ENCODE measurements at regions of chr19 and their contacts with region 1.

Region 1: GRCh38 chr19:19138169-19138981 is at the start of gene TMEM161A:
- DNase-seq: peak; percentile 97 to 99
- ATAC-seq: peak; percentile 96 to 100 (median 98)
- H3K4me3 ChIP-seq: peak within 1 kb of the TSS; percentile 32 to 85 (median 76)
- H3K27ac ChIP-seq: peak within 1 kb of the TSS in 9 of 10 donors; percentile 1 to 88 (median 85)
- H3K4me1 ChIP-seq: peaks cover 4 to 25% (median 15%) of the 10 kb centered on the region in 9 donors
- H3K27me3 ChIP-seq: no peaks in the 10 kb centered on the region
- CTCF ChIP-seq: no peak
- total RNA-seq, gene TMEM161A: 11.4 to 27.9 (median 18.6) TPM

Region 2: DNA sequence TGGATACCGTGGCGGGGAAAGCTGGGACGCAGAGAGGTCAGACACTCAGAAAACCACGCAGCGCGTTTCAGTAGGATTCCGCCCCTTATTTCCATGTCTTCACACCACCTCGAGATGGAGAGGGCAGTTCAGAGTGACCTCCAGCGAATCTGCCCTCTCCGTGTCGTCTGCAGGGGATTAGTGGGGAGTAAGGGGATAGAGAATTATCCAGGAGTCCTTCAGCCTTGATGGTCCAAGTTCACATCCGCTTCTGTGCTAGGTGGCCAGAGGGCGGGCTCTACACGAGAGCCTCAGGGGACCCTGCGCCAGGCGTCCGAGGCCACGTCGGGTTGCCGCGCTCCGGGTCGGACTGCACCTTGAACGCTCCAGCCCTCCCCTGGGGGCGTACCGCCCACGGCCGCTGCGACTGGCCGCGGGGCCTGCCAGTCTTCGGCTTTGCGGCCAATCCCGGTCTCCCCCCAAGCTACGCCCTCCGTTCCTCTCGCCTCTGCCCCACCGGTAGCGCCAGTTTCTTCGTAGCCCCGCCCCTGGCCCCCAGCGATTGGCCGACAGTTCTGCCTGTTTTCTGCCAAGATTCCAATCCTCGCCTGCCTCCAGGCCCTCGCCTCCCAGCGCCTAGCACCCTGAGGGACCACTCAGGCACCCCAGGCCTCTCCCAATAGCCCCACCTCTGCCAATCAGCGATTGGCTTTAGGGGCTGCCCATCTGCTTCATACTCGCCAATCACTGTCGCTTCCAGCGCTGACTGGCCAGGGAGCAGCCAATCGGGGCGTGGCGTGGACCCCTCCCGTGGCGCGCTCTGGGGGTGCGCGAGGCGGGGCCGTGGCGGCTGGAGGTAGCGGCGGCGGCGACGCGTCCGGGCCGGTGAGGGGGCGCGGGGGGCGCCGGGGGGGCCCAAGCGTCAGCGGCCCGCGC is 74.9 kb before region 1 on chr19 and contains the start of gene SLC25A42:
- intact Hi-C with region 1: loop called in 5 of 10 experiments (anchors 2 to 10 kb)
- DNase-seq: peak; percentile 99 to 100
- ATAC-seq: peak; percentile 93 to 97 (median 96)
- H3K4me3 ChIP-seq: peak within 1 kb of the TSS; percentile 61 to 87 (median 78)
- H3K27ac ChIP-seq: peak within 1 kb of the TSS; percentile 9 to 92 (median 84)
- H3K4me1 ChIP-seq: peaks cover 0 to 59% (median 42%) of the 10 kb centered on the region in 9 donors
- H3K27me3 ChIP-seq: no peaks in the 10 kb centered on the region
- CTCF ChIP-seq: no peak
- total RNA-seq, gene SLC25A42: 15.7 to 24.1 (median 19.3) TPM

Region 3: GRCh38 chr19:19444681-19445155 is 306.3 kb after region 1 on chr19:
- intact Hi-C with region 1: no loop called
- DNase-seq: no peak
- ATAC-seq: peak in 5 of 8 donors; percentile 27 to 51 (median 42)
- H3K4me3 ChIP-seq: no peak overlapping the region
- H3K27ac ChIP-seq: peak overlapping the region in 3 of 10 donors; percentile 14 to 76 (median 23)
- H3K4me1 ChIP-seq: peaks cover 0 to 63% (median 41%) of the 10 kb centered on the region in 9 donors
- H3K27me3 ChIP-seq: no peaks in the 10 kb centered on the region
- CTCF ChIP-seq: no peak

Measured in heart right ventricle (tissue), 16 donors.